Calu3 (cell line): ENCODE measurements at regions of chr11 and their contacts with region 1.

Region 1: GRCh38 chr11:17770048-17770652 is 35.6 kb downstream of the KCNC1 start:
- DNase-seq: peak; percentile 43
- H3K4me3 Mint-ChIP-seq: no peak overlapping the region
- H3K27ac Mint-ChIP-seq: no peak overlapping the region
- H3K4me1 Mint-ChIP-seq: no peaks in the 10 kb centered on the region
- H3K27me3 Mint-ChIP-seq: peaks cover 75% of the 10 kb centered on the region
- CTCF ChIP-seq: no peak

Region 2: GRCh38 chr11:17906436-17906835 is 136.3 kb after region 1 on chr11:
- CTCF ChIA-PET with region 1: interaction called, 12 read pairs
- intact Hi-C with region 1: no loop called
- DNase-seq: peak; percentile 45
- H3K4me3 Mint-ChIP-seq: no peak overlapping the region
- H3K27ac Mint-ChIP-seq: no peak overlapping the region
- H3K4me1 Mint-ChIP-seq: no peaks in the 10 kb centered on the region
- H3K27me3 Mint-ChIP-seq: no peaks in the 10 kb centered on the region
- CTCF ChIP-seq: peak; percentile 32